Breast epithelium (tissue), 4 donors: ENCODE measurements at regions of chr1 and their contacts with region 1.

Region 1: DNA sequence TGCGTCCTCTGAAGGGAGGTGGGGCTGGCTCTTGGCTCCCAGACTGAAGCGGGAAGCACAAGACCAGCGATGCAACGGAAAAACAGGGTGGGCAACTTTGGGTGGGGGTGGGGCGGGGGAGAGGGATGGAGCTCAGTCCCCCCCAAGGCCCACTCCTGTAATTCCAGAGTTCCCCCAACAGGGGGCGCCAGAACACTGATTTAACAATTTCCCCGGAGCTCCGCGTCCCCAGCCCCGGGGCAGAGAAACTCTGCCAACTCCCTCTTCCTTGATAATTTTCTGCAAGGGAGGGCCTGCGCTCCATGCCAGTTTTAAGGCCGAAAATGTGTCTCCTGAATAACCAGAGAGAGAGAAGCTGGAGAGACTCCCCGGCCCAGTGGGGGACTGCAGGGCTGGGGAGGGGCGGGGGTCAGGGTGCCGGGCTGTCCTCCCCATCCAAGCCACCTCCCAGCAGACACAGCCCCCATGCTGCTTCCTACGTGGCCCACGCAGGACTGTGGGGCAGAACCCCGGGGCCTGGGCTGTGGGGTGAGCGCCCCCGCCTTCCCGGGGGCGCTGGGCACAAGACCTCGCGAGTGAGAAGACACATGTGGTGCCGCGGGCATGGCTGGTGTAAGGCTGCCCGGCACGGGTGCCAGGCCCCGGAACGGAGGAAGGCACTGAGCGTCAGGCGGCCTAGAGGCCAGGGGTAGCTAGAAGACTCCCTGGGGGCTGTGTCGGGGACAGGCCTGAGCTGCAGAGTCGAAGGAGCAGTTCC is 51.4 kb downstream of the KIF21B start:
- DNase-seq: peak in 1 of 2 donors; percentile 36
- H3K4me3 ChIP-seq: peak overlapping the region in 1 of 3 donors; percentile 22
- H3K27ac ChIP-seq: no peak overlapping the region
- H3K4me1 ChIP-seq: no peaks in the 10 kb centered on the region
- H3K27me3 ChIP-seq: no peaks in the 10 kb centered on the region
- CTCF ChIP-seq: peak; percentile 28 to 57 (median 46)
- POLR2A ChIP-seq: no peak

Region 2: GRCh38 chr1:201042779-201043461 is 70.8 kb after region 1 on chr1:
- intact Hi-C with region 1: loop called (anchors 10 kb)
- DNase-seq: peak; percentile 46 to 73
- H3K4me3 ChIP-seq: no peak overlapping the region
- H3K27ac ChIP-seq: no peak overlapping the region
- H3K4me1 ChIP-seq: no peaks in the 10 kb centered on the region
- H3K27me3 ChIP-seq: peaks cover 0 to 7% of the 10 kb centered on the region in 2 donors
- CTCF ChIP-seq: peak; percentile 37 to 63 (median 53)
- POLR2A ChIP-seq: no peak